PC-9 (cell line): ENCODE measurements at regions of chr7 and their contacts with region 1.

Region 1: GRCh38 chr7:26376175-26376917 is 84.7 kb downstream of the SNX10 start:
- DNase-seq: peak; percentile 62 to 67
- H3K4me3 ChIP-seq: peak overlapping the region; percentile 81
- H3K27ac ChIP-seq: no peak overlapping the region
- H3K4me1 ChIP-seq: peaks cover 8% of the 10 kb centered on the region
- H3K27me3 ChIP-seq: no peaks in the 10 kb centered on the region
- CTCF ChIP-seq: no peak

Region 2: DNA sequence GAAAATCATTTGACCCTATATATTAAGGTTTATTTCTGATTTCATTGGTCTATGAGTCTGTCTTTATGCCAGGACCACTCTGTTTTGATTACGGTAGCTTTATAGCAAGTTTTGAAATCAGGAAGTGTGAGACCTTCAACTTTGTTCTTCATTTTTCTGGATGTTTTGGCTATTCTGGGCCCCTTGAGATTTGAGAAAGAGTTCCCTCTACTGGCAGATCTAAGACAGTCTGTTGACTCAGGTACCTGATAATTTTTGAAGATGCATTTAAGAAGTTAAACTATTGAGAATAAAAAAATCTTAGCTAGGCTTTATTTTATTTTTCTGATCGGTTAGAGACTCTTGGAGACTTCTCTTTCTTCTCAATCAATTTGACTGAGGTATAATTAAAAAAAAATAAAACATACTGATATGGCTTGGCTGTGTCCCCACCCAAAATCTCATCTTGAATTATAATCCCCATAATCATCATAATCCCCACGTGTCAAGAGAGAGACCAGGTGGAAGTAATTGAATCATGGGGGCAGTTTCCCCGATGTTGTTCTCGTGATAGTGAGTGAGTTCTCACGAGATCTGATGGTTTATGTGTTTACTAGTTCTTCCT is 124.5 kb after region 1 on chr7:
- CTCF ChIA-PET with region 1: no interaction called
- POLR2A ChIA-PET with region 1: no interaction called
- intact Hi-C with region 1: loop called (anchors 1 kb)
- DNase-seq: peak in 1 of 2 experiments; percentile 48
- H3K4me3 ChIP-seq: no peak overlapping the region
- H3K27ac ChIP-seq: no peak overlapping the region
- H3K4me1 ChIP-seq: no peaks in the 10 kb centered on the region
- H3K27me3 ChIP-seq: no peaks in the 10 kb centered on the region
- CTCF ChIP-seq: peak; percentile 73

Region 3: GRCh38 chr7:26603631-26604030 is 227.3 kb after region 1 on chr7:
- CTCF ChIA-PET with region 1: no interaction called
- POLR2A ChIA-PET with region 1: no interaction called
- intact Hi-C with region 1: loop called (anchors 5 kb)
- DNase-seq: peak; percentile 79 to 99
- H3K4me3 ChIP-seq: no peak overlapping the region
- H3K27ac ChIP-seq: no peak overlapping the region
- H3K4me1 ChIP-seq: peaks cover 24% of the 10 kb centered on the region
- H3K27me3 ChIP-seq: no peaks in the 10 kb centered on the region
- CTCF ChIP-seq: no peak

Region 4: DNA sequence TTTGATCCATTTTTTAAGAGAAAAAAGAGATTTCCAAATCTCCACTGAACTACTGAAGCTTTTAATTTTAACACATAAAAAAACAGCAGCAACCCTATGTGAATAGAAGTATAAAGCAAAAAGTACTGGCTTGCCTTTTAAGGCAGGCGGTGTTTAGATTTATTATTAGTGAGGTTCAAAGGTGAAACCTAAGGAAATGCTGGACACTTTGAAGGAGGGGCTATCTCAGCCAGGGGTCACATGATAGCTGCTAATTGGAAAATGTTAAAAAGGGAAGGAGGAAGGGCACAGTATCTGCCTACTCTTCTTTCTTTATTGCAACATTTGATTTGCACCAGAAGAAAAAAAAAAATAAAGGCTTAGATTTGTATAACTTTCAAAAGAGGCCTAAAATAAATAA is 304.2 kb after region 1 on chr7:
- CTCF ChIA-PET with region 1: interaction called, 12 read pairs
- POLR2A ChIA-PET with region 1: no interaction called
- intact Hi-C with region 1: no loop called
- DNase-seq: no peak
- H3K4me3 ChIP-seq: no peak overlapping the region
- H3K27ac ChIP-seq: no peak overlapping the region
- H3K4me1 ChIP-seq: no peaks in the 10 kb centered on the region; the same call in 1 of the 2 replicates
- H3K27me3 ChIP-seq: no peaks in the 10 kb centered on the region
- CTCF ChIP-seq: no peak

Region 5: DNA sequence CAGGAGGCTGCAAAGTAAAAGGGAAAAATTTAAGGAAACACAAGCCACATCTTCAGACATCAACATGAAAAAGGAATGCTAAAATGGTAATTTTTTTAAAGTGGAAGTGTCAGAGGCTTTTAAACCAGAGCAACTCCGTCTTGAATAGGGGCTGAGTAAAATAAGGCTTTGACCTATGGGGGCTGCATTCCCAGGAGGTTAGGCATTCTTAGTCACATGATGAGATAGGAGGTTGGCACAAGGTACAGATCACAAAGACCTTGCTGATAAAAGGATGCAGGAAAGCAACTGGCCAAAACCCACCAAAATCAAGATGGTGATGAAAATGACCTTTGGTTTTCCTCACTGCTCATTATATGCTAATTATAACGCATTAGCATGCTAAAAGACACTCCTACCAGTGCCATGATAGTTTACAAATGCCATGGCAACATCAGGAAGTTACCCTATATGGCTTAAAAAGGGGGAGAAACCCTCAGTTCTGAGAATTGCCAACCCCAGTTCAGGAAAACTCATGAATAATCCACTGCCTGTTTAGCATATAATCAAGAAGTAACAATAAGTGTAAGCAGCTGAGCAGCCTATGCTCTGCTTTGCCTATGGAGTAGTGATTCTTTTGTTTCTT is 359.7 kb after region 1 on chr7:
- CTCF ChIA-PET with region 1: no interaction called
- POLR2A ChIA-PET with region 1: no interaction called
- intact Hi-C with region 1: no loop called
- DNase-seq: no peak
- H3K4me3 ChIP-seq: no peak overlapping the region
- H3K27ac ChIP-seq: no peak overlapping the region
- H3K4me1 ChIP-seq: no peaks in the 10 kb centered on the region
- H3K27me3 ChIP-seq: no peaks in the 10 kb centered on the region
- CTCF ChIP-seq: no peak